OCI-LY7 (cell line): ENCODE measurements at regions of chr11 and their contacts with region 1.

Region 1: DNA sequence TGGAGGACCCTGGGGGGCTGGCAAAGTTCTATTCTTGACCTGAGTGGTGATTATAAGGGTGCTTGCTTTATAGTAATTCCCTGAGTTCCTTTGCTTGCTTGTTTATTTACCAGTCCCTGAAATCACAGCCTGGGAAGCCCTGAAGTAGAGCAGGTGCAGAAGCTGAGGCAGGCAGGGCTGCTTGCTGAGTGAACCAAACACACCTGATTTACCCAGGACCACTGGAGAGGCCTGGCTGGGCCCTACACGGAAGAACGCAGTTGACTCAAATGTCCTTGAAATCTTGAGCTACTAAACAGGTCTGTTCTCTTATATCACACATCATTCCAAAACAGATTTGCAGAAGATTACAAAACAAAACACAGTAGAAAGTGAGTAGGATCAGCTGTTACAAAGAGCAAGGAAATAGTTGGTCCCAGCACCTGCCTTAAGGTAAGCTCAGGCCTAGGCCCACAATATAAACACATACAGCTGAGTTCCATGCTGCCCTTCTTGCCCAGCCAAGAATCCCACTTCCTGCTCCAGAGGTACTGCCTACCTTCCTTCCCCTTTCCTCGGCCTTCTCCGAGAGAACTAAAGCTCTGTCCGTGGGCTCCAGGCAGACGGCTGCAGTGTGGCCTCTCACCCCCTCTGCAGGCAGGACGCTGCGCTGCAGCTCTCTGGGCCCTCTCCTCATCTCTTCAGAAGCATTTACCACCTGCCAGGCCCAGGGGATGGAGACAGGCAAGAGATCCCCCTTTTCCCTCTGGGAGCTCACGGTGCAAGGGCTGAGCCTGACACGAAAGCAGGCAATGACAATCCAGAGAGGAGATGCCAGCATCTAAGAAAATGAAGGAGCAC is 46.1 kb upstream of the SCUBE2 start:
- DNase-seq: peak; percentile 55
- H3K4me3 ChIP-seq: no peak overlapping the region
- H3K27ac ChIP-seq: no peak overlapping the region
- H3K4me1 ChIP-seq: no peaks in the 10 kb centered on the region
- CTCF ChIP-seq: peak; percentile 89

Region 2: DNA sequence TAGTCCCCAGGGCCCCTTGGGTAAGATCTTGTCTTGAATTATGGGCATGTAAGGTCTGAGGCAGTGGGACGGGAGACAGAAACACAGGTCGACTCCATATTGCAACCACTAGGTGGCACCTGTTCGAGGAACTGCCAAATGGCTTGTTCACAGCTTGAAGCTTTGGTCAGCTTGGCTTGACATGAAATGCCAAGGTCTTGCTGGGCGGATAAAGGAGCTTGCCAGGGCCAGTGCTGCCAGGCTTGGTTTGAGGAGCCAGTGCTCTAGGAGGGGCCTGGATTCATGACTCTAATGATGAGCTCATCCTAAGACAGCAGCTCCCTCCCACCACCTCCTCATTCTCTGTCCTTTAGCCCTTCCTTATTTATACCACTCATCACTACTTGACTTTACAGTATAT is 121.8 kb before region 1 on chr11:
- CTCF ChIA-PET with region 1: interaction called, 6 read pairs
- POLR2A ChIA-PET with region 1: no interaction called
- intact Hi-C with region 1: loop called (anchors 2 kb)
- DNase-seq: peak; percentile 75
- H3K4me3 ChIP-seq: no peak overlapping the region
- H3K27ac ChIP-seq: no peak overlapping the region
- H3K4me1 ChIP-seq: no peaks in the 10 kb centered on the region
- CTCF ChIP-seq: peak; percentile 87

Region 3: DNA sequence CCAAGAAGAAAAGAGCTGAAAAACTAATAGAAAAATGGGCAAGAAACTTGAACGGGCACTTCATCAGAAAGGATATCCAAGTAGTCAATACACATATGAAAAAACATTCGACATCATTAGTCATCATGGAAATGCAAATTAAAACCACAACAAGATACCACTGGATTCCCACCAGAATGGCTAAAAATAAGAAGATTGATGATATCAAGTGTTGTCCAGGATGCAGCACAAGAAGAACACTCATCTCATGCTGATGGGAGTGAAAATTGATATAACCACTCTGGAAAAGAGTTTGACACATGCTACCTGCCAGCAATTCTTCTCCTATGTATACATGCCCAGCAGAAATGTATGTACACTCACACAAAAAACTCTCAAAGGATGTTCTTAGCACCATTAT is 19.2 kb before region 1 on chr11:
- CTCF ChIA-PET with region 1: no interaction called
- POLR2A ChIA-PET with region 1: interaction called, 11 read pairs
- intact Hi-C with region 1: no loop called
- DNase-seq: no peak
- H3K4me3 ChIP-seq: no peak overlapping the region
- H3K27ac ChIP-seq: no peak overlapping the region
- H3K4me1 ChIP-seq: no peaks in the 10 kb centered on the region
- CTCF ChIP-seq: no peak